Activated CD4-positive, alpha-beta T cell treated with anti-CD3 and anti-CD28 coated beads, Interleukin-2, amount 10 ng/mL, durations not matched to agents 24 days and 14 days (primary cell): ENCODE measurements at regions of chr2 and their contacts with region 1.

Region 1: GRCh38 chr2:217223222-217223930 is 363.5 kb upstream of the TNP1 start:
- DNase-seq: peak; percentile 87
- H3K4me3 Mint-ChIP-seq: peak overlapping the region; percentile 51
- H3K27ac Mint-ChIP-seq: peak overlapping the region; percentile 86
- H3K4me1 Mint-ChIP-seq: peaks cover 42% of the 10 kb centered on the region
- H3K27me3 Mint-ChIP-seq: peaks cover 4% of the 10 kb centered on the region

Region 2: DNA sequence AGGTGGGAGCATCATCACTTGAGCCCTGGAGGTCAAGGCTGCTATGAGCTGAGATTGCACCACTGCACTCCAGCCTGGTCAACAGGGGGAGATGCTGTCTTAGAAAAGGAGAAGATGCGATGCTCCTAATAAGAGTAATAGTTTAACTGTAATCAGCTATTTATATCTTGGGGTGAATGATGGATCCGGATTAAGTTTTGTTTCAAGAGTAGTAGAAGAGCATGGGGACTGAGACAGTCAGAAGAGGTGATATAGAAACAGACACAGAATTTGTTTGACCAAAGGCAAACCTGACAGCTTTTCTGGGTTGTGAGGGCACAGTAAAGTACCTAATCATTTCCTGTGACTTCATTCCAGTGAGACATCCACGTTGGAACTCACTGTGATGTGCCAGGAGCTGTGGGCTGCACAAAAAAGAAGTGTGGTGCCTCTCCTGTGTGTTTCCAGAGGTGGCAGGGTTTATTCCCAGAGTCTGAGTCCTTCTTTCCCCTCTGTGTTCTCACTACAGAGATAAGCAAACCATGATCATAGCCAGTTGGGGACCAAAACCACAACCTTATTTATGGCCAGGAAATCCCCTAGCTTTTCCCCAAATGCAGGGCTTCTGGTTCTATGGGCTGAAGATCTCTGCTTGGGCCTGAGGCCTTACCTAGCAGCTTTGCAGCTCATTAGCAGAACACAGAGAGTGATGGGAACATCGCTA is 1000.6 kb before region 1 on chr2:
- intact Hi-C with region 1: loop called (anchors 5 kb)
- DNase-seq: peak; percentile 72
- H3K4me3 Mint-ChIP-seq: peak overlapping the region; percentile 24
- H3K27ac Mint-ChIP-seq: peak overlapping the region; percentile 69
- H3K4me1 Mint-ChIP-seq: peaks cover 39% of the 10 kb centered on the region
- H3K27me3 Mint-ChIP-seq: no peaks in the 10 kb centered on the region

Region 3: DNA sequence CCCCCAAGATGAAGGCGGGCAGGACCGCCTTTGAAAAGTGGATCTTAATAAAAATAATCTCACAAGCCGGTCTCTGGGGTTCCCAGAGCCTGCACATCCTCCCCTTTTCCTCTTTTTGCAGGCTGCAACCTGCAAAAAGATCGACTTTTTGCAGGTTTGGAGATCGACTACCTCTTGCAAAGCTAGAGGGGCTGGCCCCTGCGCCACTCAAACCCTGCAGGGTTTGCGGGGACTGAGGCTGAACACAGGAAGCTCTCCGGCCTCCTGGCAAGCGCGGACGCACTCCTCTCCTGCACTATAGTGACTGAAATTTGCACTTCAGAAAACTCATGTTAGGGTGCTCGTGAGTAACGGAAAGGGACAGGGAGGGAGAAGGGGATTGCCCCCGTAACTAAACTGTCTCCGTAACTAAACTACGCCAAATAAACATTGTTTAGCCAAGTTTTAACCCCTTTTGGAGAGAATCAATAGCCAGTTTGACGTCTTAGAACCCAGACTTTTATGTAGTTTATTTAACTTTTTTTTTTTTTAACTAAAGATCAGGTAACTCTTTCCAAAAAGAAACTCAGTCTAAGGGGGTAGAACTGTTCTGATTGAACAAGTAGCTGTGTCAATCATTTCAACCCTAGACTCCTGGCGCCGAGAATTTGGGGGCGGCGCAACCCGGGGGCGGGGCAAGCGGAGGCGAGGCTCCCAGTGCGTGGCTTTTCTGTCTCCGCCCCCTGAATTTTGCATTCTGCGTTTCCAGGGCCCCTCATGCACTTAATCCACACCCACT is 530.6 kb before region 1 on chr2:
- intact Hi-C with region 1: loop called (anchors 2 kb)
- DNase-seq: peak; percentile 93
- H3K4me3 Mint-ChIP-seq: peak overlapping the region; percentile 89
- H3K27ac Mint-ChIP-seq: peak overlapping the region; percentile 75
- H3K4me1 Mint-ChIP-seq: peaks cover 21% of the 10 kb centered on the region
- H3K27me3 Mint-ChIP-seq: peaks cover 65% of the 10 kb centered on the region

Region 4: GRCh38 chr2:217075268-217076057 is 147.9 kb before region 1 on chr2:
- intact Hi-C with region 1: no loop called
- DNase-seq: no peak
- H3K4me3 Mint-ChIP-seq: no peak overlapping the region
- H3K27ac Mint-ChIP-seq: no peak overlapping the region
- H3K4me1 Mint-ChIP-seq: peaks cover 11% of the 10 kb centered on the region
- H3K27me3 Mint-ChIP-seq: no peaks in the 10 kb centered on the region

Region 5: DNA sequence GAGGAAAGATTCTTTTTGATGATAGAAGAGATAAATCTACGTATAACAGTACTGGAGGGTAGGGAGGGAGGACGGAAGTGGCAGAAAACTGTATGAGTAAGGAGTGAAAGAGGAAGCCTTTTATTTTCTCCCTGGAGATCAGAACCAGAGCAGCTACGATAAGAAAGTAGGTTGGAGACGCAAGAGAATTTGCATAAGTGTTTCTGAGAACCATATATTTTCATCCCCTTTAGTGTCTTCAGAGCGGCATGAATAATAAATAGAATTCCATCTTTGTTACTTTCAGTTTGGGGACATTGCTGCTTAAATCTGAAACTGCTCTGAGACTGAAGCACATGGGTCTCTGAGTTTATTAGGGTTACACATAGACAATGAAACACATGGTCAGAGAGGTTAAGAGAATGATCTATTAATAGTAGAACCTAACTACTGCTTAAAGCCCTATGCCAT is 133.3 kb before region 1 on chr2:
- intact Hi-C with region 1: loop called (anchors 1 kb)
- DNase-seq: peak; percentile 67
- H3K4me3 Mint-ChIP-seq: peak overlapping the region; percentile 54
- H3K27ac Mint-ChIP-seq: peak overlapping the region; percentile 74
- H3K4me1 Mint-ChIP-seq: peaks cover 43% of the 10 kb centered on the region
- H3K27me3 Mint-ChIP-seq: no peaks in the 10 kb centered on the region

Region 6: GRCh38 chr2:217756375-217757107 is 533.2 kb after region 1 on chr2:
- intact Hi-C with region 1: loop called (anchors 1 kb)
- DNase-seq: peak; percentile 89
- H3K4me3 Mint-ChIP-seq: peak overlapping the region; percentile 45
- H3K27ac Mint-ChIP-seq: peak overlapping the region; percentile 83
- H3K4me1 Mint-ChIP-seq: peaks cover 21% of the 10 kb centered on the region
- H3K27me3 Mint-ChIP-seq: peaks cover 3% of the 10 kb centered on the region